ENCODE measurements at regions of chr10 and their contacts with region 1.

Region 1: DNA sequence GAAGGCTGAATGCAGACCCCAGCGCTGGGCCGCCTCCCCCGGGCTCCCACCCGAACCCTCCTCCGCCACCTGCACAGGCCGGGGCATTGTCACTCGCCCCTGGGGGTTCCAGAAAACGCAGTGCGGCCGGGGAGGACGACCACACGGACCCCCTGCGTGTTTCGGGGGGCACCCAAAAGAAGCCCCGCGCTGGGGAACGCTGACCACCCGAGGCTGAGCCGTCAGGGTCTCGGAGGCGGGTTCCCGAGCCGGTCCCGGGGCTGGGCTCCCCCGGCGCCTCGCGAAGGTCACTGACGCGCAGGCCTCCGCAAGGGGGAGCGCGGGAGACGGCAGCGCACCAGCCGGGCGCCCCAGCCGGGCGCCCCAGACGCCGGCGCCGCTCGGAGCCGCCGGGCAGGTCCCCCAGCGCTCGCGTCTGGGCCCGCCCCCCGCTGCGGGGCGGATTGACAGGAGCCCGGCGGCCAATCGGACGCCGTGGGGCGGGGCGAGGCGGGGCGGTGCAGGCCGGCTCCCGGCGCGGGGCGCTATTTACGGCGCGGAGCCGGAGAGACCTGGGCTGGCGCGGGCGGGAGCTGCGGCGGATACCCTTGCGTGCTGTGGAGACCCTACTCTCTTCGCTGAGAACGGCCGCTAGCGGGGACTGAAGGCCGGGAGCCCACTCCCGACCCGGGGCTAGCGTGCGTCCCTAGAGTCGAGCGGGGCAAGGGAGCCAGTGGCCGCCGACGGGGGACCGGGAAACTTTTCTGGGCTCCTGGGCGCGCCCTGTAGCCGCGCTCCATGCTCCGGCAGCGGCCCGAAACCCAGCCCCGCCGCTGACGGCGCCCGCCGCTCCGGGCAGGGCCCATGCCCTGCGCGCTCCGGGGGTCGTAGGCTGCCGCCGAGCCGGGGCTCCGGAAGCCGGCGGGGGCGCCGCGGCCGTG is at the start of gene BAMBI:
- DNase-seq: peak; percentile 63
- total RNA-seq, gene BAMBI: 230 and 279 TPM in 2 replicates

Region 2: DNA sequence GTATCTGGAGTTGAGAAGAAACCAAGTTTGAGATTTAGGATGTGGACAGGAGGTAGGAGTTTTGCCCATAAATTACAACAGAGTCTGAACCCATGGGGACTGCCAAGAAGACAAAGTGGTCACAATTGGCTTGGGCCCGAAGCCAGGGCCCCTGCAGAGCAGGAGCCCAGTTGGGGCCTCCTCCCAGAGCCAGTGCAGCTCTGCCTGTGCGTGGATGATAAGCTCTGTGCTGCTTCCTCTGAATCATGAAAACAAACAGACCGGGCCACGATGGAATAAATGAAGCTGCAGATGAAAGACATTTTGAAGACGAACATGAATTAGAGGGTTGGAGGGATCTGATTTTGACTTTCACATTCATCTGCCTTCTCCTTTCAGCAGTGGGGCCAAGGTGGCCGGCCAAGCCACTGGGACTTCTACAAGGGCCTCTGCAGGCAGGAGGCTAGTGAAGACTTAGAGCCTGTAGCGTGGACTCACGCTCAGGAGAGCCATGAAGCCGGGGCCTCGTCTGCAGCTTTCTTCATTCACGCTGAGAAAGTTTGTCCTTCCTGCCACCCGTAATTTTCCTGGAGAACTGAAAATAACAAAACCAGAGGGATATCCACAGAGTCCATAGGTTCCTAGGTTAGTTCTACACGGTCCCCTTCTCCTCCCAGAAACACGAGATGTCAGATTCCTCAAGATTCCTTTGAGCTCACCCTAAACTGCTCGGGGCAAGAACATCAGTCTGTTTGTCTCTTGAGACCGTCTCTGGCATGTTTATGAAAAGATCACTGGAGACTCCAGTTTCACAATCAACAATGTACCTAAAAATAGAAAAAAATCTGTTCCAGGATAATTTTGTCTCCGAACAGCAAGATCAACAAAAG is 455.0 kb after region 1 on chr10:
- in situ Hi-C with region 1: loop called (anchors 25 kb)
- DNase-seq: peak; percentile 8

Region 3: GRCh38 chr10:29344073-29344820 is 667.0 kb after region 1 on chr10:
- in situ Hi-C with region 1: loop called (anchors 10 kb)
- DNase-seq: peak; percentile 72